ENCODE measurements at regions of chr14 and their contacts with region 1.

Region 1: GRCh38 chr14:50964595-50965390 is 20.5 kb upstream of the PYGL start:
- DNase-seq: no peak
- ATAC-seq: no peak
- H3K4me3 ChIP-seq: no peak overlapping the region
- H3K27ac ChIP-seq: no peak overlapping the region
- H3K4me1 ChIP-seq: peaks cover 12% of the 10 kb centered on the region
- H3K27me3 ChIP-seq: no peaks in the 10 kb centered on the region
- CTCF ChIP-seq: no peak

Region 2: GRCh38 chr14:51219473-51220448 is 255.0 kb after region 1 on chr14:
- intact Hi-C with region 1: loop called (anchors 10 kb)
- DNase-seq: no peak
- ATAC-seq: no peak
- H3K4me3 ChIP-seq: no peak overlapping the region
- H3K27ac ChIP-seq: no peak overlapping the region
- H3K4me1 ChIP-seq: no peaks in the 10 kb centered on the region
- H3K27me3 ChIP-seq: no peaks in the 10 kb centered on the region
- CTCF ChIP-seq: peak; percentile 65

Measured in upper lobe of right lung (tissue), 1 donor.